ENCODE measurements at regions of chr5 and their contacts with region 1.

Region 1: DNA sequence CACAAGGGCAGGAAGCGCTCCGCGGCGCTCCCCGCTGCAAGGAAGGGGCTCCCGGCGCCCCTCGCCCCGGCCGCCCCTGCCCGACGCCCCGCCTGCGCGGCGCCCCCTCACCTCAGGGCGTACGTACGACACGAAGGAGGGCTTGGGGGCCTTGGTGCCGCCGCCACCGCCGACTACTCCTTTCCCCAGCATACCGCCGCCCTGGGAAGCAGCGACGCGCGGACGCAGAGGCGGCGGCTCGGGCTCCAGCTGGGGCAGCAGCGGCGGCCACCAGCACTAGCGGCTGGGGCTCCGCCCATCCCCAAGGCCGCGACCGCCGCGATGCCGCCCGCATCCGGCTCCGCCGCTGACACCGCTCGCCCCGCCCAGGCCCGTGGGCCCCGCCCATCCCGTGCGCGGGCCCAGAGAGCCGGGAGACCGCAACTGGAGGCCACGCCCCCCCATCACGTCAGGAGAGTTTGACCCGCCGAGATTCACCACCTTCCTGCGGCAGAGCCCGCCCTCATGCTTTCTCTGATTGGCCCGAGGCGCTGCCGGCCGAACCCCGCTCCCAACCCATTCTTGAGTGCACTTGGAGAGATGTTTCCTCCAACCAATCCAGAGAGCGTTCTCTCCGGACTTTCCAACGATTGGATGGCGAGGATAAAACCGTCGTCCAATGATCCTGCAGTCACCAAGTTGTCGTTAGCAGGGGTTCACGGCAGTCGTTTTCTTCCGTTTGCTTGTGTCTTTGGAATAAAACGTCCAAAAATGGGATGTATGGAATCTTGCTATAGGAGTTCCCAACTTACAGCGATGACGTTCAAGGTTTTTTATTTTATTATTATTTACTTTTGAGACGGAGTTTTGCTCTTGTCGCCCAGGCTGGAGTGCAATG is at the start of gene MTMR12:
- DNase-seq: peak; percentile 100
- total RNA-seq, gene MTMR12: 27.2 TPM

Region 2: DNA sequence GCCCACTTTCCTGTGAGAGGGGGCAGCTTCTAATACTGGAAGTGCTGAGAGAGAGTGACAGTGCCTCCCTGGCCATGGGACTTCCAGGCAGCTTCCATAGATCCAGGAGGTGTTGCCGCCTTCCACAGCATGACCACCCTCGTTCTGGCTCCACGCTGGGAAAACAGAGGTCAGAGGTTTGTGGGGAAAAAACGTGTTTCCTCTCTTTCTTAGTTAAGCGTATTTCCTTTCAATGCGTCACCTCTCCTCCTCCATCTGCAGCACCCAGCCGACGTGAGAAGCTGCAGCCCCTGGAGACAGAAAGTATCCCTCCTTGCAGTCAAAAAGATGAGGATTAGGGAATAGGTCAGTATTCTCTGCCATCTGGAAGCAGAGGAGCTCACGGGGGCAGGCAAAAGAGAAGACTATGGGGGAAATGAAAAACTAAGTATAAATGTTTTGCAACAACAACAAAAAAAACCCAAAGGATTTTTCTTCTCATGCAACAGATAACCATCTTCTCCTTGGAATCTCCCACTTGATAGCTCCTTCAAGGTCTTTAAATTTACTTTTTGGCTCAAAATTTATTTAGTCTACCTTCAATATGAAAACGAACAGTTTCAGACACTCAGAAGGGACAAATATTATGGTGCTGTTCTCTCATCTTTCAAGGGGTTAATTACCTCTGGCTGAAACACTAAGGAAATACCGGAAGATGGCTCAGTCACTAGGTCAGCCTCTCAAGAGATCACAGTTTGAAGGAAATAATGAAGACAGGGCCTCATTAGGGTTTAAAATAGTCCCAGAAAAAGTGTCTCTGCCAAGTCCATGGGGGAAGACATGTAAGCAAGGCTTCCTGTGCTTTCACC is 38.1 kb before region 1 on chr5:
- intact Hi-C with region 1: loop called (anchors 2 kb)
- DNase-seq: no peak

Region 3: GRCh38 chr5:32444431-32445286 is 131.8 kb after region 1 on chr5 and contains the start of gene ZFR:
- intact Hi-C with region 1: loop called (anchors 5 kb)
- DNase-seq: peak; percentile 97
- total RNA-seq, gene ZFR: 73.8 TPM

Region 4: GRCh38 chr5:32703957-32704356 is 391.1 kb after region 1 on chr5:
- intact Hi-C with region 1: no loop called
- DNase-seq: no peak

Region 5: GRCh38 chr5:33362915-33363314 is 1050.0 kb after region 1 on chr5:
- intact Hi-C with region 1: no loop called
- DNase-seq: no peak

Measured in cardiac septum (tissue), 1 donor.